A673 (cell line): ENCODE measurements at regions of chr14 and their contacts with region 1.

Region 1: DNA sequence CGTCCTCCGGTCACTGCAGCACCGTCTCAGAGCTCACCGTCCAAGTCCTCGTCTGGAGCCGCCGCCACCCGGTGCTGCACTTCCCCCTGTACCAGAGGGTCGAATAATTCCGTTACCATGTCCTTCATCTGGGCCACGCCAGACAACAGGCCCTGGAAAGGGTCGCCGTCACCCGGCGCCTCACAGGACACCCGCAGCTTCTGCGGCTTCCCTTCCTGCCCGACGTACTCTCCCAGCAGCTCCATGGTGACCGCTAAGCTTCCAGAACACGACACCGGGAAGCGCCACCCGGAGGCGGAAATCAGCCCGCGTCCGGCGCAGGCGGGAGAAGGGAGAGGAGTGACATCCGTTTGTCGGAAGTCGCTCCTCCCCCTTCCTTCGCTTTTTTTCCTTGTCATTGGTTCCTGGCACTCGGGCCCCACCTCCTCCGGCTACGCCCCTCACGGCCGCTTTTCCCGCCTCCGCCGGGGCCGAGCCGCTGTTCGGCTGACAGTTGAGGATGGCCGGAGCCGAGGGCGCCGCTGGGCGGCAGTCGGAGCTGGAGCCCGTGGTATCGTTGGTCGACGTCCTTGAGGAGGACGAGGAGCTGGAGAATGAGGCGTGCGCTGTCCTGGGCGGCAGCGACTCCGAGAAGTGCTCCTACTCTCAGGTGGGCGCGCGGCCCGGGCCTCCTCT is at the starts of genes GON7 and UBR7:
- DNase-seq: peak; percentile 99
- H3K4me3 ChIP-seq: peak within 1 kb of the TSS; percentile 94
- H3K27ac ChIP-seq: peak within 1 kb of the TSS; percentile 93
- H3K4me1 ChIP-seq: peaks cover 12% of the 10 kb centered on the region
- H3K27me3 ChIP-seq: no peaks in the 10 kb centered on the region
- CTCF ChIP-seq: peak; percentile 27; the same call in 1 of the 2 replicates
- total RNA-seq, gene GON7: 19.6 and 24.1 TPM in 2 replicates
- total RNA-seq, gene UBR7: 64.0 and 73.1 TPM in 2 replicates

Region 2: GRCh38 chr14:93033983-93034670 is 172.8 kb before region 1 on chr14:
- CTCF ChIA-PET with region 1: no interaction called
- POLR2A ChIA-PET with region 1: no interaction called
- intact Hi-C with region 1: no loop called
- DNase-seq: peak; percentile 19
- H3K4me3 ChIP-seq: no peak overlapping the region
- H3K27ac ChIP-seq: no peak overlapping the region
- H3K4me1 ChIP-seq: no peaks in the 10 kb centered on the region
- H3K27me3 ChIP-seq: no peaks in the 10 kb centered on the region
- CTCF ChIP-seq: peak; percentile 66

Region 3: GRCh38 chr14:93219103-93219726 is 12.3 kb after region 1 on chr14:
- CTCF ChIA-PET with region 1: interaction called, 10 read pairs
- POLR2A ChIA-PET with region 1: no interaction called
- intact Hi-C with region 1: no loop called
- DNase-seq: peak; percentile 70
- H3K4me3 ChIP-seq: no peak overlapping the region
- H3K27ac ChIP-seq: no peak overlapping the region
- H3K4me1 ChIP-seq: no peaks in the 10 kb centered on the region
- H3K27me3 ChIP-seq: no peaks in the 10 kb centered on the region
- CTCF ChIP-seq: peak; percentile 73

Region 4: GRCh38 chr14:93533472-93534241 is 326.7 kb after region 1 on chr14:
- CTCF ChIA-PET with region 1: no interaction called
- POLR2A ChIA-PET with region 1: no interaction called
- intact Hi-C with region 1: loop called (anchors 10 kb)
- DNase-seq: no peak
- H3K4me3 ChIP-seq: no peak overlapping the region
- H3K27ac ChIP-seq: no peak overlapping the region
- H3K4me1 ChIP-seq: no peaks in the 10 kb centered on the region
- H3K27me3 ChIP-seq: no peaks in the 10 kb centered on the region
- CTCF ChIP-seq: no peak